Activated CD4-positive, alpha-beta T cell treated with anti-CD3 and anti-CD28 coated beads for 36 hours (primary cell): ENCODE measurements at regions of chr2 and their contacts with region 1.

Region 1: DNA sequence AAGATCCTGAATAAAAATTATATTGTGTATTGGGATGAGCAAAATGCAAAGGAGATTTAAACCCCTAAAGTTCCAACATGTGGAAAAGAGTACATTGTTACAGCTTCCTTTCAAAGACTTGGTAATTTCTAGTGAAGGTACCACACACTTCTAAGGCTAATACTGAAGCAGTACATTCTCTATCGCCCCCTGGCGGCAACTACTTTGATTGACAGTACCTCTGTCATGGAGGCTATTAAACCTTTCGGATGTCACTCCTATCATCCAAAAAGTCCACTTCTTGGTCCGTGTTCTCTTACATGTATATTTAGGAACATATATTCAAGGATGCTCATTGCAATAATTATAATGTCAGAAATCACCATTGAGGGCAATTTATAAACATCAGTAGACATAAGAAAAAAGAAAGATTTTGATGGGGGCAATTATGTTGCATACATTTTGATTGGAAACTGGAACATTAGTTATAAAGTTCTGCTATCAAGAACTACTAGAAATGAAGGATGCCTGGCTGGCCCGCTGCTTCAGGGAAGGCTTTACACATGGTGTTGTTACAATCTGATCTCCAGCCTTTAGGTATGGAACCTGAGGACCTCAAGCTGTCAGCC is 601.6 kb downstream of the CPS1 start:
- DNase-seq: peak; percentile 85
- ATAC-seq: peak; percentile 84
- H3K4me3 Mint-ChIP-seq: no peak overlapping the region
- H3K27ac Mint-ChIP-seq: no peak overlapping the region
- H3K4me1 Mint-ChIP-seq: no peaks in the 10 kb centered on the region
- H3K27me3 Mint-ChIP-seq: peaks cover 3% of the 10 kb centered on the region

Region 2: DNA sequence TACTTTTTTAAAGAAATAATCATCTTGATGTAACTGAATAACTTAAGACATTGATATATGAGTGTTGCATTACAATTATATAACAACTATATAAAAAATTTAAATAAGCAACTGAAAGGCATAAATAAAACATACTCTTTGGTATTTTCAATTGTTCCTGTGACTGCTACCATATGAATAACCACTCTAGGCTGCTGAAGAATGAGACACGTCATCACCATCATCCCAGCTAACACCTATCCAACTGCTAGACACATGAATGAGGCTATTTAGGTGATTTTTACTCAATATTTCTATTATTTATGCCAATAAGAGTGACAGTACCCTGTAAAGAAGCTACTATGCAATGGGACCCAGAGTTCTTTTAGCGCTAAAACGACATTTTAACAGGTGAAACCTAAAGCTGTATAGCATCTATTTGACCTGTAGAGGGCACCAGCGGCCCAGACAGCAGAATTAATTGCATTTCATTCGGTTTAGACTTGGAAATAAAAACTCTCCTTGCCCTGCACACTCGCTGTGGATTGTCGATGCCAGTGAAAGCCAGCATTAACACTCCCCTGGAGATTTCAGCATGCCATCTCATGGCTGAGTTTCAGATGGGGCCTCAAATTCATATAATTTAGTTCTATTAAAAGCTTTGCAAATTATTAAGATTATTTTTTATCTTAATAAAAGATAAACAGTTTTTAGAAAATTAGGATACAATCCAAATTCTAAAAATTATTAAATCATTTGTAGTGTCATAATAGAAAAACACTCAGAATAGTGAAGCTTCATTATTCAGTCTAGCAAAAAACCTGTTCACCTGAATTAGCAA is 1823.6 kb before region 1 on chr2:
- CTCF ChIA-PET with region 1: no interaction called
- POLR2A ChIA-PET with region 1: no interaction called
- intact Hi-C with region 1: no loop called
- DNase-seq: peak; percentile 68
- ATAC-seq: peak; percentile 47
- H3K4me3 Mint-ChIP-seq: no peak overlapping the region
- H3K27ac Mint-ChIP-seq: no peak overlapping the region
- H3K4me1 Mint-ChIP-seq: no peaks in the 10 kb centered on the region
- H3K27me3 Mint-ChIP-seq: no peaks in the 10 kb centered on the region

Region 3: GRCh38 chr2:210252699-210253606 is 905.0 kb before region 1 on chr2:
- CTCF ChIA-PET with region 1: no interaction called
- POLR2A ChIA-PET with region 1: no interaction called
- intact Hi-C with region 1: loop called in 1 of 2 experiments (anchors 2 kb)
- DNase-seq: no peak
- ATAC-seq: no peak
- H3K4me3 Mint-ChIP-seq: no peak overlapping the region
- H3K27ac Mint-ChIP-seq: no peak overlapping the region
- H3K4me1 Mint-ChIP-seq: no peaks in the 10 kb centered on the region
- H3K27me3 Mint-ChIP-seq: no peaks in the 10 kb centered on the region

Region 4: DNA sequence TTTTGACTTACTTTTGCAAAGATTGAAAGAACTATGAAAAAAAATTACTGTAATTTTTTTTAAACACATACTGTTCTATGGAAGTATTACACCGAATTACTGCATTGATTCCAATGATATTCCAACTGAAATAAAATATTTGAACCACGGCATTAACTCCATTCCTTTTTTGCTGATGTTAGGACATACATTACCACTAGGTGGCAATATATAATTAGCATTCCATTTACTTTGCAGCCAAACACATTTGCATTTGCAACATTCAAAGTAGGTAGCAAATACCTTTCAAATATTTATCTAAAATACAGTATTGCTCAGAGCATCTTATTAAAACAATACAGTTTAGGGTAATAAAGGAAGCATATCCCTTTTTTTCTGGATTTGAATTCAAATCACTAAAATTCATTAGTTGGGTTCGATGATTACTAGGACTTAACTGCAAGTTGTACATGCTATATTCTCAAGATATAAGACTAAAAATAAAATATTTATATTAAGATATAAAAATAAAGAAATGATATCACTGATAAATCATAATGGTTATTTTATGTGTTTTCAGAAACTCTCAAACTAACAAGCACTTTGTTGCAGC is 712.7 kb before region 1 on chr2:
- CTCF ChIA-PET with region 1: no interaction called
- POLR2A ChIA-PET with region 1: no interaction called
- intact Hi-C with region 1: loop called in 1 of 2 experiments (anchors 10 kb)
- DNase-seq: no peak
- ATAC-seq: no peak
- H3K4me3 Mint-ChIP-seq: no peak overlapping the region
- H3K27ac Mint-ChIP-seq: no peak overlapping the region
- H3K4me1 Mint-ChIP-seq: peaks cover 5% of the 10 kb centered on the region
- H3K27me3 Mint-ChIP-seq: no peaks in the 10 kb centered on the region

Region 5: DNA sequence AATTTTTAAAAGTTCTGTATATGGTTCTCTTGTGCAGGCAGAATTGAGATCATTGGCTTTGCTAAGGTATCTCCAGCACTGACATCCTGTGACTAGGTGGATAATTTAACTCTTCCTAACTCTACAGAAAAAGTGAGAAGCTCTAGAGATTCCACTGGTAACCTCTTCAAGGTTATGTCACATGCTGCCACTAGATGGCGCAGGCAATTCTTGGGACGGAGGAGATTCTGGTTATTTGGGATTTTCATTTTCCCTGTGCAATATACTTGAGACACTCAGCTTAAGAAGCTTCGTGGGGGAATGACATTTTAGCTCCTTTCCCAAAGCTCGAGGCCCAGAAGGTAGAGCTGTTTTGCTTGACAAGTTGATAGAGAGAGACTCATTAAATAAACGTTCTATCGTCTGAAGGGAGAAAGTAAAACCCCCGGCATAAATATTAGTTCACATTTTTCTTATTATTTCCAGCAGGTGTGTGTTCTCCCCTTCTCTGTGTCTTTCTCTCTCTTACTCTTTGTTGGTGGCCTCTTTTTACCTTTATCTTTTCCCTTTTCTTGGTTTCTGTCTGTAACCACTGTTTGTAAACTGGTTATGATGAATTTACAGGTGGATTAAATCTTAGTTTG is 654.8 kb before region 1 on chr2:
- CTCF ChIA-PET with region 1: no interaction called
- POLR2A ChIA-PET with region 1: no interaction called
- intact Hi-C with region 1: loop called in 1 of 2 experiments (anchors 5 kb)
- DNase-seq: peak; percentile 48
- ATAC-seq: peak; percentile 39
- H3K4me3 Mint-ChIP-seq: peak overlapping the region; percentile 8
- H3K27ac Mint-ChIP-seq: no peak overlapping the region
- H3K4me1 Mint-ChIP-seq: no peaks in the 10 kb centered on the region
- H3K27me3 Mint-ChIP-seq: peaks cover 20% of the 10 kb centered on the region

Region 6: DNA sequence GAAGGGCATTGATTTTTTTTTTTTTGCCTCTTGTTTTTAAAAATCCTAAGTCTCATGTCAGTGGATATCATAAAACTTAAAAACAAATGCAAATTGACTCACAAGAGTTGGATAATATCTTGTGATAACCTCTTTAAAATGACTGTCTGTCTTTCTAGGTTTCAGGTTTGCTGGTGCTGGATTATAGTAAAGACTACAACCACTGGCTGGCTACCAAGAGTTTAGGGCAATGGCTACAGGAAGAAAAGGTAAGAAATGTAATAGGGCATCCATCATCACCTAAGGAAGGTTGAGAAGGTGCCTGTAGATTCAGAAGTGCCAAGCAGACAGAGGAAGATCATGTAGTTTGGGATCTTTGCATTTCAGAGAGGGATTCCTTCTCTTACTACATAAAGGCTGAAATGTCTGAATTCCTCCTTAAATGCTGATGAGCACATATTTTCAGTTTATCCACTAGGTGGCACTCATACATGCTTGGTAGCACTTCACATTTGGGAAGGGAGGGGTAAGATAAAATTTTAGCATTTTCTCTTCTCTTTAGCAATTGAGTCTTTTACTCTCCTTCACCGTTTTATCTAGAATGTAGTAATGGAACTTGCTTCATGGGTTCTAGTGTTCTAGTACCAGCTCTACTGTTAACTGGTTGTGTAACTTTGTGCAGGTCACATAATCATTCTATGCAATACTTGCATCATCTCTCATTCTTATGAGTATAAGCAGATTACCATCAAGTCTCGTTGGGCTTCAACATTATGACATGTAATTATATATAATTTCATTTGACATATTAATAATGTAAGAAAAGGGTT is 580.5 kb before region 1 on chr2:
- CTCF ChIA-PET with region 1: no interaction called
- POLR2A ChIA-PET with region 1: no interaction called
- intact Hi-C with region 1: loop called (anchors 1 to 2 kb)
- DNase-seq: no peak
- ATAC-seq: no peak
- H3K4me3 Mint-ChIP-seq: no peak overlapping the region
- H3K27ac Mint-ChIP-seq: no peak overlapping the region
- H3K4me1 Mint-ChIP-seq: no peaks in the 10 kb centered on the region
- H3K27me3 Mint-ChIP-seq: peaks cover 2% of the 10 kb centered on the region

Region 7: GRCh38 chr2:210617732-210618330 is 540.1 kb before region 1 on chr2:
- CTCF ChIA-PET with region 1: interaction called, 8 read pairs
- POLR2A ChIA-PET with region 1: no interaction called
- intact Hi-C with region 1: loop called (anchors 1 to 2 kb)
- DNase-seq: peak; percentile 6
- ATAC-seq: no peak
- H3K4me3 Mint-ChIP-seq: no peak overlapping the region
- H3K27ac Mint-ChIP-seq: no peak overlapping the region
- H3K4me1 Mint-ChIP-seq: no peaks in the 10 kb centered on the region
- H3K27me3 Mint-ChIP-seq: no peaks in the 10 kb centered on the region

Region 8: GRCh38 chr2:211085056-211085680 is 72.8 kb before region 1 on chr2:
- CTCF ChIA-PET with region 1: no interaction called
- POLR2A ChIA-PET with region 1: no interaction called
- intact Hi-C with region 1: loop called (anchors 1 kb)
- DNase-seq: peak; percentile 6
- ATAC-seq: no peak
- H3K4me3 Mint-ChIP-seq: no peak overlapping the region
- H3K27ac Mint-ChIP-seq: no peak overlapping the region
- H3K4me1 Mint-ChIP-seq: no peaks in the 10 kb centered on the region
- H3K27me3 Mint-ChIP-seq: peaks cover 2% of the 10 kb centered on the region